Panc1 (cell line): ENCODE measurements at regions of chr1 and their contacts with region 1.

Region 1: GRCh38 chr1:159598196-159598595 is 10.6 kb downstream of the APCS start:
- DNase-seq: no peak
- ATAC-seq: no peak
- H3K4me3 ChIP-seq: no peak overlapping the region
- H3K27ac ChIP-seq: no peak overlapping the region
- H3K4me1 ChIP-seq: no peaks in the 10 kb centered on the region; the same call in 1 of the 2 replicates
- H3K27me3 ChIP-seq: no peaks in the 10 kb centered on the region
- CTCF ChIP-seq: no peak

Region 2: DNA sequence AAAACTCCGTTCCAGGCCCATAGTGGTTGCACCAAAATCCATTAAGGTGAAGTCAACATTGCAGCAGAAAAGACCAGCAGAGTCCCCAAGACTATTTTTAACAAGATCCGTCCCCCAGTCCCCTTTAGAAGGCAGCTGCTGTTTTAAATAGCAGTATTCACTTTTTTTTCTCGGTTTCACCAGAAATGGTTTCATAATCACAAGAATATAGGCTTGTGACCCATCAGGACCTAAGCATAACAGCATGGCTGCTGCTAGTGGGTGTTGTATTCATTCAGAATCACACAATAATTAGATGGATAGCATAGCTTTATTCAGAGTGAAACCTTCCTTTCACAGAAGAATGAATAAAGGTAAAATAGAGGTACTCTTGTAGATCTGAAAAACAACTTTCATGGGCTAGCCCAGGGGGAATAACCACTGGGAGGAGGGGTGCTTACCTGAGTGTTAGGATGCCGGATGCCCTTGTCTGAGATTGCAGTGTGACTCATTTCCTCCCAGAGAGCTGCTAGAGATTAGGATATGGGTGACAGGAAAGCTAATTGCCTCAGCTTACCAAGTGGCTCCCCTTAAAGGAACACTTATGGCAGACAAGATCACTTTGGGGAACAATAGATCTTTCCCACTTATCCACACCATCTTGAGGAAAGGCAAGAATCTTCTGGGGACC is 358.5 kb before region 1 on chr1:
- CTCF ChIA-PET with region 1: no interaction called
- POLR2A ChIA-PET with region 1: no interaction called
- in situ Hi-C with region 1: no loop called
- intact Hi-C with region 1: no loop called
- DNase-seq: no peak
- ATAC-seq: no peak
- H3K4me3 ChIP-seq: no peak overlapping the region
- H3K27ac ChIP-seq: no peak overlapping the region
- H3K4me1 ChIP-seq: no peaks in the 10 kb centered on the region
- H3K27me3 ChIP-seq: no peaks in the 10 kb centered on the region
- CTCF ChIP-seq: no peak

Region 3: DNA sequence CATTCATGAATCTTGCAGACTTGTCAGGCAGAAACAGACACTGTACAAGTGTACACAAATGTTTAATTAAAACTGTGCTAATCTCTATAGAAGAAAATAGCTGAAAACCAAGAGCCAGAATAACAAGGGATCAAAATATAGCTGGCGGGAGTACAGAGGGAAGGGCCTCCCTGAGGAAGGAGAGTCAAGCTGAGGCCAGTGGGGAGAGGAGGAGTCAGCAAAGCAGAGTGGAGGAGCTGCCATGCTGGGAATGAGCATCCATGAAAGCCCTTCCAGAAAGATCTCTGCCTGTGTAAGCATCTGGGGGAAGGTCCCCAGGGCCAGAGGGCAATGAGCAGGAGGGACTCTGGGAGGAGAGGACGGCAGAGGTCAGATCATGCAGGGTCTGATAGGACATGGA is 243.6 kb after region 1 on chr1:
- CTCF ChIA-PET with region 1: interaction called, 10 read pairs
- POLR2A ChIA-PET with region 1: no interaction called
- in situ Hi-C with region 1: no loop called
- intact Hi-C with region 1: no loop called
- DNase-seq: no peak
- ATAC-seq: no peak
- H3K4me3 ChIP-seq: no peak overlapping the region
- H3K27ac ChIP-seq: no peak overlapping the region
- H3K4me1 ChIP-seq: no peaks in the 10 kb centered on the region
- H3K27me3 ChIP-seq: no peaks in the 10 kb centered on the region
- CTCF ChIP-seq: no peak